Sigmoid colon (tissue), 7 donors: ENCODE measurements at regions of chr12 and their contacts with region 1.

Region 1: DNA sequence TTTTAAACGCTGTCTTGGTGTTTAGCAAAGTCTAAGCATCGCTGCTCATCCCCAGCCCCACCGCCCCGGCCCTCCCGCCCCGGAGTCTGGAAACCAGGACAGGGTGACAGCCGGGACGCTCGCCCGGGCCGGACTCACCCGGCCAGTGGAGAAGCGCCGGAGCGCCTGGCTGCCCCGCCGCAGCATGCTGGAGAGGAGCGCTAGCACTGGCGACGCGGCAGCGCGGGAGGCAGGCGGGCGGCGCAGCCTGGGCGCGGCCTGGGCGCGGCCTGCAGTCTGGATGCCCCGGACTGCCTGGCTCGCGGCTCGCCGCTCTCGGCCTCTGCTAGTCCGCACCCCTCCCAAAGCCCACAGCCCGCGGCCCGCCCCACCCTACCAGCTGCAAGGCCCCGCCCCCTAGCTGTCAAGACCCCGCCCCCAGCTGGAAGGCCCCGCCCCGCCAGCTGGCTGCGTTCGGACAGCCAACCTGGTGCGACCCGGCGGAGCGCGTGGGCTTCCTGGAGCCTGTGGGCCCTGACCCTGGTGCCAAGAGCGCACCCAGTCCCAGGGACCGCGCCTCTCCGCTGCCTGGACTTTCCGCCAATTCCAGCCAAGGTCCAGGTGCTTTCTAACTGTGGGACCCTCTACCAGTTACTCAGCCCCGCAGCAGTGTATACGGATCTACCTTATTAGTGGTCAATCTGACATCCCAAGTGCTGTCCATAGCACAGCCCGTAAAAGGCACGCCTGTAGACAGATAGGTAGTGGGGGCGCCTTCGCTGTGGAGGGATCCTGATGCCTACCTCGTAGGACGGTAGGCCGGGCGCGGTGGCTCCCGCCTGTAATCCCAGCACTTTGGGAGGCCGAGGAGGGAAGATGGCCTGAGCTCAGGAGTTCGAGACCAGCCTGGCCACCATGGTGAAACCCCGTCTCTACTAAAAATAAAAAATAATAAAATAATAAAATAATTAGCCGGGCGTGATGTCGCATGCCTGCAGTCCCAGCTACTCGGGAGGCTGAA is at the start of gene ALDH1L2:
- DNase-seq: peak; percentile 93
- H3K4me3 ChIP-seq: peak within 1 kb of the TSS; percentile 40 to 60 (median 58)
- H3K27ac ChIP-seq: peak within 1 kb of the TSS; percentile 57 to 78 (median 68)
- H3K4me1 ChIP-seq: peaks cover 0 to 18% (median 13%) of the 10 kb centered on the region in 4 donors
- H3K27me3 ChIP-seq: no peaks in the 10 kb centered on the region
- CTCF ChIP-seq: no peak
- EP300 ChIP-seq: no peak
- POLR2A ChIP-seq: no peak
- total RNA-seq, gene ALDH1L2: 3.1 to 13.0 (median 6.6) TPM

Region 2: DNA sequence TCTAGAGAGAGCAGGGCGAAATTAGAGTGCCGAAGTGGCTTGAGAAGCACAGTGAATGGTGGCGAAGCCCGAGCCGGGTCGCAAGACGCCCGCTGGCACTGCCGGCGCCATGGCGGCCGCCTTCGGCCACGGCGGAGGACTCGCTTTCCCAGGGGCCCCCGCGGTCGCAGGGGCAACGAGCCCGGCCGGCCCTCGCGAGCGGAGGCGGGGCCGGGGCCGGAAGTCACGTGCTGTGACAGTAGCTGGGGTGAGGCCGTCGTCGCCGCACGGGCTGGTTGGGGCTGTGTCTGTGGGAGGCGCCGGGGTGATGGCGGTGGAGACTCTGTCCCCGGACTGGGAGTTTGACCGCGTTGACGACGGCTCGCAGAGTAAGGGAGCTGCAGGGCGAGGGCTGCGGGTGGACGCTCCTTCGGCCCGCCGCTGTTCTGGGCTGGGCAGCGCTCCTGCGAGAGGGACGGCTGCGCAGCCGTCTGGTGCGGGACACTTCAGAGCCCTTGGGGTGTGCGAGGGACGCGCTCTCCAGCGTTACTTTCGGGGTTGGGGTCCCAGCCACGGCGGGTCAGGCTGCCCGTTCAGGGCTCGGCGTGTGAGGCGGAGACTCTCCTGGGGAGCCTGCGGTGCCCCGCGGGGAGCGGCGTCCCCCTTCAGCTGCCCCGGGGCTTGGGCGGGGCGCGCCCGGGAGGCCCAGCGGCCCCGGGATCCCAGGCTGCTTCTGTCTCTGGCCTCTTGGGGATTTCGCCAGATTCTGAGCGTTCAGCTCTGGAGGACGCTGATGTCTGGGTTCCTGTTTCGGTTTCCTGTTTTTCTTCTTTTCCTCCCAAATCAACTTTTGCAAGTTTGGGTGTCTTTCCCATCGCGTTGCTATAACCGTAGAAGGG is 23.2 kb after region 1 on chr12 and contains the start of gene WASHC4:
- intact Hi-C with region 1: loop called (anchors 2 kb)
- DNase-seq: peak; percentile 97
- H3K4me3 ChIP-seq: peak within 1 kb of the TSS; percentile 85 to 97 (median 92)
- H3K27ac ChIP-seq: peak within 1 kb of the TSS; percentile 94 to 99 (median 98)
- H3K4me1 ChIP-seq: peaks cover 0 to 45% (median 35%) of the 10 kb centered on the region in 4 donors
- H3K27me3 ChIP-seq: no peaks in the 10 kb centered on the region
- CTCF ChIP-seq: no peak
- EP300 ChIP-seq: no peak
- POLR2A ChIP-seq: peak; percentile 86 to 96
- total RNA-seq, gene WASHC4: 43.3 to 64.3 (median 59.7) TPM